ENCODE measurements at regions of chr17 and their contacts with region 1.

Region 1: DNA sequence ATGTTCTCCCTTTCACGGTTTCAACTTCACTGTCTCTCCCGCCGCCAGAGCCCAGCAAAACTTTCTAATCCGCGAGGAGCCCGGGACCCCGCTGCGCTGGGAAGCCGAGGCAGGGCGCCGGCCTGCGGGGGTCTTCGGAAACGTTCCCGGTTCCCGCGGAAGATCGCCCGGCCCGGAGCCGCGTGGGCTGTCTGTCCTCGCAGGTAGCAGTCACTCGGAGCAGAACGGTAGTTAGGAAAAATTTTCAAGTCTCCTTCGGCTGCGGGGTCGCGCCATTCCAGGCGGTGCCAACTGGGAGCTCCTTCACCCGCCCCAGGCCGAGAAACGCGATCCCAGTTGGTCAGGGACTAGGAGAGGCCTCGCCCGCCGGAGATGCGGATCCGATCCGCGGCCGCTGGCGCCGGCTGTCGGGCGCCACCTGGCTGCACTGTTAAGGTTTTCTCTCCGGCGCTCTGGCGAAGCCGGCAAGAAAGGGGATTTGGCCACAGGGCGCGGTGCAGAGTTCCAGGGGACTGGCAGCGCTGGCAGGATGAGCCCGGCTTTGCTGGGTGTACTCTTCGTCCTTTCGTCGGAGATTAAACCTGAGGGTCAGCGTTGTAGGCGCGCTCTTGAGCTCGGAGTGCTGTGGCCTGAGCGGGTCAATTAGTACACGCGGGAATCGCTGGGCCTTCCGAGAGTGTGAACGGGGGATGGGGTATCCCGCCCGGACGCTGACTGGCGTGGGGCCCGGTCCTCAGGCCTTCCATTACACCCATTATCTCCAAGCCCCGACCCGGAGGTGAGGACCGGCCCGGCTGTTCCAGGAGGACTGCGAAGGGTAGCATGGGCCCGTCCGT is 135.4 kb downstream of the KCNJ12 start:
- DNase-seq: peak; percentile 87
- H3K4me3 ChIP-seq: peak overlapping the region; percentile 40 to 78 (median 71)
- H3K27ac ChIP-seq: peak overlapping the region; percentile 7
- H3K4me1 ChIP-seq: peaks cover 9% of the 10 kb centered on the region
- H3K27me3 ChIP-seq: peaks cover 1 to 3% of the 10 kb centered on the region in 2 experiments
- CTCF ChIP-seq: peak; percentile 79 to 85
- POLR2A ChIP-seq: no peak

Region 2: GRCh38 chr17:20797292-20797691 is 714.3 kb before region 1 on chr17:
- CTCF ChIA-PET with region 1: interaction called, 9 read pairs
- POLR2A ChIA-PET with region 1: no interaction called
- dilution Hi-C with region 1: no loop called
- intact Hi-C with region 1: loop called (anchors 2 kb)
- DNase-seq: no peak
- H3K4me3 ChIP-seq: no peak overlapping the region
- H3K27ac ChIP-seq: no peak overlapping the region
- H3K4me1 ChIP-seq: no peaks in the 10 kb centered on the region
- H3K27me3 ChIP-seq: no peaks in the 10 kb centered on the region
- CTCF ChIP-seq: no peak
- POLR2A ChIP-seq: no peak

Region 3: DNA sequence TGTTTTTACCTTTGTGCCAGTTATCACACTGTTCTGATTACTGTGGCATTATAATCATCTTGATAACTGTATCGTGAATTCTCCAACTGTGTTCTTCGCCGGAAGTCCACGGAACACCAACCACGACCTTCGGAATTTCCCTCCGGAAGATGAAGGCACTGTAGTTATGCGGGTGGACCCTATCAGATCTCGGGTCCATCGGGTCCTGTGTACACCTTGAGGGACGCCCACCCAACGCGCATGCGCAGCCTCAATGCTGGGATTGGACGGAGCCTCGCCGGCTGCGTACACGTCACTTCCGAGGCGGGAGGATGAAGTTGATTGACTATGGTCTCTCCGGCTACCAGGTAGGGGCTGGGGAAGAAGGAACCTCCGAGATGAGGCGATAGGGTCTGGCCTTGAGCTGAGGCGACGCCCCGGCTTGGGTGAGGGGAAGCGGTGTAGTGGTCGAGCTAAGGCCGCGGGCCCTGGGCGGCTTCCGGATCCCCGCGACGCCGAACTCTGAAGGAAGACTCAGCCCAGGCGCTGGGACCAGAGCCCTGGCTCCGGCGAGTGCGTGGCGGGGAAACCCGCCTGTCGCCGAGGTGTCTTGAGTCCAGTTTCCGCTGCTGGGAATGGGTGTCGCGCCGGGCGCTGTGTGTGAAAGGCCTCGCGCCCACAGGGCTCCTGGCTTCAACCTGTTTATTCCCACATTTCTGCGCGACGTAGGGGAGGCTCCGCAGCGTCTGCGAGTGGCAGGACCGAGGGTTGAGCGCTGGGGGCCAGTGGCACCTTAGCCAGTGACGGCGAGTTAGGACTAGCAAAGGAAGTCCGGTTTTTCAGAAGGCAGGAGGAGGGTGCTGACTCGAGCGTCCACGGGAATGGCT is 384.7 kb before region 1 on chr17 and contains the start of gene DHRS7B:
- CTCF ChIA-PET with region 1: interaction called, 30 read pairs
- POLR2A ChIA-PET with region 1: no interaction called
- dilution Hi-C with region 1: no loop called
- intact Hi-C with region 1: loop called (anchors 1 kb)
- DNase-seq: peak; percentile 93
- H3K4me3 ChIP-seq: peak within 1 kb of the TSS; percentile 47 to 84 (median 67)
- H3K27ac ChIP-seq: peak within 1 kb of the TSS; percentile 73
- H3K4me1 ChIP-seq: peaks cover 20% of the 10 kb centered on the region
- H3K27me3 ChIP-seq: peaks cover 0 to 2% of the 10 kb centered on the region in 2 experiments
- CTCF ChIP-seq: no peak
- POLR2A ChIP-seq: no peak
- total RNA-seq, gene DHRS7B: 12.7 and 14.0 TPM in 2 replicates

Region 4: GRCh38 chr17:21140911-21141310 is 370.7 kb before region 1 on chr17:
- CTCF ChIA-PET with region 1: no interaction called
- POLR2A ChIA-PET with region 1: no interaction called
- dilution Hi-C with region 1: no loop called
- intact Hi-C with region 1: no loop called
- DNase-seq: no peak
- H3K4me3 ChIP-seq: no peak overlapping the region
- H3K27ac ChIP-seq: no peak overlapping the region
- H3K4me1 ChIP-seq: no peaks in the 10 kb centered on the region
- H3K27me3 ChIP-seq: no peaks in the 10 kb centered on the region
- CTCF ChIP-seq: no peak
- POLR2A ChIP-seq: no peak

Region 5: DNA sequence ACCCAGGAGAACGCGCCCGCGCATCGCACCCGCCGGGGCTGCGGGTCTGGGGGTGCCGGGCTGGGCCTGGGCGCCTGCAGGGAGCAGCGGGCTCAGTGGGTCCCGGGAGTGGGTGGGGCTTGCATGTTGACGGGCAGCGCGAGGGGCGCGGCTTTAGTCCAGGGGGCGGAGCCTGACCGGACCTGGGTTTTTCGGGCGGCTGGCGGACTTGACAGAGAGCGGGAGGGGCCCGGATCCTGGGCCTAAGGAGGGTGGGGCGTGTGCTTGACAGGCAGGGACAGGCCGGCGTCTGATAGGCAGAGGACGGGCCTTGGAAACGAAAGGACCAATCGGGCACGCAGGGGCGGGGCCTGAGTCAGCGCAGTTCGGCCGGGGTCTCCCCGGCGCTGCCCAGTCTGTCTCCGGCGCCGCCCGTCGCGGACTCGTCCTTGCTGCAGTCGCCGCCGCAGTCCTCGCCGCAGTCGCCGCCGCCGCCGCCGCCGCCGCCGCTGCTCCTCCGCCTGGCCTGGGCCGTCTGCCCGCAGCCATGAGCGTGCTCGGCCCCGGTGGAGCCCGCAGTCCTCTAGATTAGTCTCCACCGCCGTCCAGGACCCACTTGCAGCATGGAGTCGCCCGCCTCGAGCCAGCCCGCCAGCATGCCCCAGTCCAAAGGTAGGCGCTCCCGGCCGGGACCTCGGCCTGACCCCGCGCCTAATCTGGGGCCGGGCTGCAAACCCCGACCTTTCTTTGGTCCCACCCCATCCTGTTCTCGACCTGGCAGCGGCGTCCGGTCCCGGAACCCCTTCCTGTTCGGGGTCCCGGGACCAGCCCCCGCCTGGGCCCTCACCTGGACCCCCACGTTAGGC is 227.0 kb before region 1 on chr17 and contains the start of gene MAP2K3:
- CTCF ChIA-PET with region 1: interaction called, 68 read pairs
- POLR2A ChIA-PET with region 1: no interaction called
- dilution Hi-C with region 1: no loop called
- intact Hi-C with region 1: loop called (anchors 1 kb)
- DNase-seq: peak; percentile 99
- H3K4me3 ChIP-seq: peak within 1 kb of the TSS; percentile 69 to 75 (median 74)
- H3K27ac ChIP-seq: peak within 1 kb of the TSS; percentile 99
- H3K4me1 ChIP-seq: peaks cover 48% of the 10 kb centered on the region
- H3K27me3 ChIP-seq: no peaks in the 10 kb centered on the region
- CTCF ChIP-seq: no peak
- POLR2A ChIP-seq: peak; percentile 82
- total RNA-seq, gene MAP2K3: 33.2 and 36.3 TPM in 2 replicates

Region 6: GRCh38 chr17:21376759-21377690 is 134.6 kb before region 1 on chr17:
- CTCF ChIA-PET with region 1: interaction called, 4 read pairs
- POLR2A ChIA-PET with region 1: no interaction called
- dilution Hi-C with region 1: no loop called
- intact Hi-C with region 1: loop called (anchors 5 kb)
- DNase-seq: peak; percentile 10
- H3K4me3 ChIP-seq: peak overlapping the region; percentile 11 to 31 (median 21)
- H3K27ac ChIP-seq: no peak overlapping the region
- H3K4me1 ChIP-seq: peaks cover 6% of the 10 kb centered on the region
- H3K27me3 ChIP-seq: peaks cover 6% of the 10 kb centered on the region in 2 experiments
- CTCF ChIP-seq: no peak
- POLR2A ChIP-seq: no peak

Region 7: GRCh38 chr17:21500064-21500463 is 11.5 kb before region 1 on chr17:
- CTCF ChIA-PET with region 1: interaction called, 11 read pairs
- POLR2A ChIA-PET with region 1: no interaction called
- dilution Hi-C with region 1: no loop called
- intact Hi-C with region 1: no loop called
- DNase-seq: no peak
- H3K4me3 ChIP-seq: no peak overlapping the region
- H3K27ac ChIP-seq: no peak overlapping the region
- H3K4me1 ChIP-seq: no peaks in the 10 kb centered on the region
- H3K27me3 ChIP-seq: peaks cover 0 to 3% of the 10 kb centered on the region in 2 experiments
- CTCF ChIP-seq: no peak
- POLR2A ChIP-seq: no peak